ENCODE measurements at regions of chr11 and their contacts with region 1.

Region 1: DNA sequence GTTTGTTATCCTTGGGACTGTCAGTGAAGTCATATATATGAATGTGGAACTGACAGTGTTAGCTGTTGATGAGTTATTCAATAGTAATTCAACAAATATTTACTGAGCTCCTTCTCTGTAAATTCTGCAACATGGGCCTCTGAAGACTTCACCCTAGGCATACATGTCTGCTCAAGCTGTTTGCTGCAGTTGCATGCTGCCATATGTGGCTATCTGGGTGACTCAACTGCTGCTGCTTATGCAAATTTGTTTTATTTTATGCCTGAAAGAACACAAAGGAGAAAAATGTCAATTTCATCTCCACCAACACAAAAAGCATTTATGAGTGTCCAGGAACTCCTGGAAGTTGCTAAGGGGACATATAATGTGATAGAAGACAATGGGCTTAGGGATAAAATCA is 417.6 kb downstream of the AASDHPPT start:
- DNase-seq: peak; percentile 93
- ATAC-seq: peak; percentile 95
- H3K4me3 ChIP-seq: no peak overlapping the region
- H3K27ac ChIP-seq: peak overlapping the region; percentile 68
- H3K4me1 ChIP-seq: peaks cover 39% of the 10 kb centered on the region
- H3K27me3 ChIP-seq: no peaks in the 10 kb centered on the region
- CTCF ChIP-seq: no peak

Region 2: DNA sequence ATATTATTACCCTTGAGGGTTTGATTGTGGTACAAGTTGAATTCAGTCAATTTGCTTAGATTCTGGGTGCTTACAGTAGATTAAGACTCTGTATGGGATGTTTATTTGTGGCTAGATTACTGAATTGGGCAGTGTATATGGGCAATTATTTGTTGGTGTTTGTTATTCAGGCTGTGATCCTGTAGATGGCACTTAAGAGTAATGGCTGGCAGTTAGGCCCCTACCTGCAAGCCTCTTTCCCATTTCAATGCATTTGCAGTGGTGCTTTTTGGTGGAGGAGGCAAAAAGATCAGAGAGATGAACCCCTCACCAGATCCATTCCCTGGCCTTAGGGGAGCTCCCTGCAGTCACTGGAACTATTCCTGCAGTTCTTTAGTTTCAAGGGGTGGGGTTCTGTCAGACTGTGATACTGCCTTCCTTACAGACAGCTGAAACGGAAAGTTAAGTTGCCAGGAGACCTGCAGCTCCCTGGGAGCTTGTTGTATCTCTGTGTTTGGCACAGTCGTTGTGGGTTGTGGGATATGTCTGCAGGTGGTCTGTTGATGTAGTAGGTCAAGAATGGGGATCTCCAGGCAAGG is 218.1 kb before region 1 on chr11:
- CTCF ChIA-PET with region 1: no interaction called
- POLR2A ChIA-PET with region 1: no interaction called
- intact Hi-C with region 1: loop called (anchors 2 kb)
- DNase-seq: peak; percentile 62
- ATAC-seq: peak; percentile 61
- H3K4me3 ChIP-seq: no peak overlapping the region
- H3K27ac ChIP-seq: no peak overlapping the region
- H3K4me1 ChIP-seq: peaks cover 28% of the 10 kb centered on the region
- H3K27me3 ChIP-seq: no peaks in the 10 kb centered on the region
- CTCF ChIP-seq: peak; percentile 87

Region 3: DNA sequence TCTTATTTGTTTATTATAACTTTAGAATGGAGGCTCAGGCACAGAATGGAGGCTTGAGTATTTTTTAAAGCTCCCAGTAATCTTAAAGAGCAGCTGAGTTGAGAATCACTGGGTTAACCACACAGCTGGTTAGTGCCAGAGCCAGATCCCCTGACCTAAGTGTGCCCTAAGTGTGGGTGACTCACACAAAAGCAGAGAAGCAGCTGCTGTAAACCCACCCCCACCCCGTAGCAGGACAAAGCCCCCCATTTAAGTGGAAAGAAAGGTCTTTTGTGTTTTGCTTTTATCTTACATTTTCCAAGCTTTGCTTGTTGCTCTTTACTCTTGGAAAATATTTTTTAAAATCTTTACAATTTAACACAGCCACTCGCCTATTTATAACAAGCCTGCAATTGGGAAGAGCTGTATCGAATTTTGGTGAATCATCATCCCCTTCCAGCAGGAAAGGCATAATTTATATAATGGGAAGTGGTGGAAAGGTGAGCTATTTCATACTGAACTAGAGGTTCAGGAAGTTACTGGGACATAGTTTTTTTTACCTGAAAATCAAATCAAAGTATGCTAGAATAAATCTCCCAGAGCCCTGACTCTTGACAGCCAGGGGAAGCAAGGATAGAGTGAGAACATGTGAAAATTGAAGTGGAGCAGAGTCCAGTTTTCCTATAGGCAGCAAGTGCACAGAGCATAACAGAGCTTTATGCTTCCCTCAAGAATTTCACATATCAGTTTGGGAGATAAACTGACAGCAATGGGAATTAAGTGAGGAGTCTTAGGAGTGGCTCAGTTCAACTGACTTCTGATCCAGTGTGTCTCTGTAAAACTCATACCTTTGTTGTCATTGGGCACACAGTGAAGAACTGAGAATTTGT is 11.9 kb before region 1 on chr11:
- CTCF ChIA-PET with region 1: no interaction called
- POLR2A ChIA-PET with region 1: no interaction called
- intact Hi-C with region 1: loop called (anchors 1 kb)
- DNase-seq: peak; percentile 89
- ATAC-seq: peak; percentile 93
- H3K4me3 ChIP-seq: peak overlapping the region; percentile 56
- H3K27ac ChIP-seq: peak overlapping the region; percentile 85
- H3K4me1 ChIP-seq: peaks cover 27% of the 10 kb centered on the region
- H3K27me3 ChIP-seq: no peaks in the 10 kb centered on the region
- CTCF ChIP-seq: no peak

Region 4: GRCh38 chr11:106724293-106724892 is 229.3 kb after region 1 on chr11:
- CTCF ChIA-PET with region 1: no interaction called
- POLR2A ChIA-PET with region 1: no interaction called
- intact Hi-C with region 1: loop called (anchors 1 kb)
- DNase-seq: no peak
- ATAC-seq: no peak
- H3K4me3 ChIP-seq: no peak overlapping the region
- H3K27ac ChIP-seq: no peak overlapping the region
- H3K4me1 ChIP-seq: no peaks in the 10 kb centered on the region
- H3K27me3 ChIP-seq: no peaks in the 10 kb centered on the region
- CTCF ChIP-seq: no peak